WTC11 (cell line): ENCODE measurements at regions of chr19 and their contacts with region 1.

Region 1: GRCh38 chr19:15869109-15869555 is 28.7 kb downstream of the CYP4F2 start:
- DNase-seq: peak; percentile 57
- ATAC-seq: peak; percentile 95
- H3K4me3 Mint-ChIP-seq: no peak overlapping the region
- H3K27ac Mint-ChIP-seq: peak overlapping the region; percentile 75
- H3K4me1 Mint-ChIP-seq: peaks cover 23% of the 10 kb centered on the region
- H3K27me3 Mint-ChIP-seq: no peaks in the 10 kb centered on the region; the same call in 1 of the 2 replicates
- CTCF ChIP-seq: peak; percentile 27; the same call in 1 of the 2 replicates

Region 2: DNA sequence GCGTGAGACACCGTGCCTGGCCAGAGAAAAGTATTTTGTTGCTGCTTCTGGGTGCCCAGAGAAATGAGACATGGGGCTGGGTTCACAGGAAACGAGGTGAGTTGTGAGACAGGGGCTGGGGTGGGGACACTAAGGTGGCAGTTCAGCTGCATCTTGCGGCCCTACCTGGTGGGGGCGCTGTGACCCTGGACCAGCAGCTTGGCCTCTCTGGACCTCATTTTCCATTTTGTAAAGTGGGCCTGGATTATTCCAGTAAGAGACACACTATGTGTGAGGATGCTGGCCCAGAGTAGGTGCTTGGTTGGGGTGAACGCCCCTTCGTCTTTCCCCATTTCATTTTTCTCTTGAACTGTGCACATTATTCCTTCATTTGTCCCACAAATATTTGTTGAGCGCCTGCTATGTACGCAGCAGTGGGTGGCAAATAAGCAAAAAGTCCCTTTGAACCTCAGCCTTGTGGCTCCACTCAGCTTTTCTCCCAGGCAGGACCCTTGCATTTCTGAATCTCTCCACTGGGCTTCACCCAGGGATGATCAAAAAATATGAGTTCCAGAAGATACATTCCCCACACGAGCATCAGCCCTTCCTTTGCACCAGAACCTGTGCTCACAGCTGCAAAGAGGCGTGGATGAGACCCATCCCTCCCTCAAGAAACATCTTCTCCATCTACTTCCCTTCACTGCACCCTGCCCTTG is 27.1 kb before region 1 on chr19:
- CTCF ChIA-PET with region 1: interaction called, 10 read pairs
- POLR2A ChIA-PET with region 1: interaction called, 3 read pairs
- DNase-seq: peak; percentile 67
- ATAC-seq: no peak; the same call in 1 of the 2 replicates
- H3K4me3 Mint-ChIP-seq: no peak overlapping the region
- H3K27ac Mint-ChIP-seq: no peak overlapping the region
- H3K4me1 Mint-ChIP-seq: peaks cover 16% of the 10 kb centered on the region
- H3K27me3 Mint-ChIP-seq: peaks cover 21% of the 10 kb centered on the region
- CTCF ChIP-seq: peak; percentile 74